OCI-LY7 (cell line): ENCODE measurements at regions of chr1 and their contacts with region 1.

Region 1: GRCh38 chr1:1374929-1375662 is at the start of gene AURKAIP1:
- DNase-seq: peak; percentile 100
- H3K4me3 ChIP-seq: peak within 1 kb of the TSS; percentile 99
- H3K27ac ChIP-seq: peak within 1 kb of the TSS; percentile 75
- H3K4me1 ChIP-seq: peaks cover 38% of the 10 kb centered on the region
- CTCF ChIP-seq: peak; percentile 42; the same call in 1 of the 2 replicates
- total RNA-seq, gene AURKAIP1: 156 and 163 TPM in 2 replicates

Region 2: GRCh38 chr1:1115786-1116700 is 259.1 kb before region 1 on chr1 and contains the start of gene C1orf159:
- CTCF ChIA-PET with region 1: no interaction called
- POLR2A ChIA-PET with region 1: no interaction called
- intact Hi-C with region 1: no loop called
- DNase-seq: peak; percentile 98
- H3K4me3 ChIP-seq: peak within 1 kb of the TSS; percentile 95
- H3K27ac ChIP-seq: no peak within 1 kb of the TSS
- H3K4me1 ChIP-seq: peaks cover 5% of the 10 kb centered on the region
- CTCF ChIP-seq: no peak
- total RNA-seq, gene C1orf159: 13.1 and 27.6 TPM in 2 replicates

Region 3: DNA sequence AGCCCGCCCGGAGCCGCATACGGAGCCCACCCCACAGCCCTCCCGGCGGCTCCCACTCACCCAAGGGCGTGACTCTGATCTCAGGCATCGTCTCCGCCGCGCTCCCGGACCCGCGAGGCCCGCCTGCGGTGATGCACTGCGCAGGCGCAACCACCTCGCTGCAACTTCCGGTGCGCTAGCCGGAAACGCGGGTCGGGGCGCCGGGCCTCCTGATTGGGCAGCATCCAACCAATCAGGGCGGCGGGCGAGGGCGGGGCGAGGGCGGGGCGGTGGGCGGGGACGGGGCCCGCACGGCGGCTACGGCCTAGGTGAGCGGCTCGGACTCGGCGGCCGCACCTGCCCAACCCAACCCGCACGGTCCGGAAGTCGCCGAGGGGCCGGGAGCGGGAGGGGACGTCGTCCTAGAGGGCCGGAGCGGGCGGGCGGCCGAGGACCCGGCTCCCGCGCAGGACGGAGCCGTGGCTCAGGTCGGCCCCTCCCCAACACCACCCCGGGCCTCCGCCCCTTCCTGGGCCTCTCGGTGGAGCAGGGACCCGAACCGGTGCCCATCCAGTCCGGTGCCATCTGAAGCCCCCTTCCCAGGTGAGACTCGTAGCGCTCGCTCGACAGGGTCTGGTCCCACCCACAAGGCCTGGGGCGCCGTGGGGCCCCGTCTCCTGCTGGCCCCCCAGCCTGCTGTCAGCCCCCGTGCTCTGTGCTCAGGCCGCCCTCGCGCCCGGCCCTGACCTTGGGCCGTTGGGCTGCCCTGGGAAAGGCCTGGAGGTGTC is 50.4 kb before region 1 on chr1 and contains the starts of genes CPTP and INTS11:
- CTCF ChIA-PET with region 1: no interaction called
- POLR2A ChIA-PET with region 1: no interaction called
- intact Hi-C with region 1: loop called (anchors 2 kb)
- DNase-seq: peak; percentile 96
- H3K4me3 ChIP-seq: peak within 1 kb of the TSS; percentile 84
- H3K27ac ChIP-seq: peak within 1 kb of the TSS; percentile 36
- H3K4me1 ChIP-seq: peaks cover 25% of the 10 kb centered on the region
- CTCF ChIP-seq: no peak
- total RNA-seq, gene CPTP: 16.6 and 18.5 TPM in 2 replicates
- total RNA-seq, gene INTS11: 128 and 142 TPM in 2 replicates

Region 4: DNA sequence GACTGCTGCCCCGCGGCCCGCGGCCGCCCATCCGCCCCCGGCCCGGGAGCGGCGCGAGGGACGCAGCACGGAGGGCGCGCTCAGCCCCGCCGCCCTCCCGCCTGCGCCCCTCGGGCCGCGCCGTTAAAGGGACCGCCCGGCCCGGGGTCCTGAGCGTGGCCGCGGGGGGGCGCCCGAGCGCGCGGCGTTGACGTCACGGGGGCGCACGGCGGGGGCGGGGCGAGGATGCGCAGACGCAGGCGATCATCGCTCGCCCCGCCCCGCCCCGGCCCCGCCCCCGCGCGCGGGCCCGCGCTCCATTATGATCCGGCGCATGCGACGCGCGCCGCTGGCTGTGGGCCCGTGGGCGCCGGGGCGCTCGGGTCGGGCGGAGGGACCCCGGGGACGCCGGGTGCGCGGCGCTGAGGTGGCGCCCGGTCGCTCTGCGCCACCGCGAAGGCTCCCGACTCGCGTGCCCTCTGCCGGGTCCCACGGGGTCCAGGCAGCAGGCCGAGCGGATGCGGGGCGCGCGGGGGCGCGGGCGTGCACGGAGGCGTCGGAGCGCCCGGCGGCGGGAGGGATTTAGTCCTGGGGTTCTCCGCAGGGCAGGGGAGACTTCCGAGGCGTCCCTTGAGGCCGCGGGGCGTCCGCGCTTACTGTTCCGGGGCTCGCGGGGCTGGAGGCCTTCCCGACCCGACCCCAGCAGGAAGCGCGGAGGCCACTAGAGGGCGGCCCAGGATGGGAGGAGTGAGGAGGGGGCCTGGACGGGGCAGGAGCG is 25.7 kb before region 1 on chr1 and contains the start of gene DVL1:
- CTCF ChIA-PET with region 1: no interaction called
- POLR2A ChIA-PET with region 1: interaction called, 3 read pairs
- intact Hi-C with region 1: loop called (anchors 1 kb)
- DNase-seq: peak; percentile 80
- H3K4me3 ChIP-seq: peak within 1 kb of the TSS; percentile 78
- H3K27ac ChIP-seq: peak within 1 kb of the TSS; percentile 64
- H3K4me1 ChIP-seq: peaks cover 31% of the 10 kb centered on the region
- CTCF ChIP-seq: peak; percentile 60
- total RNA-seq, gene DVL1: 41.7 and 47.1 TPM in 2 replicates

Region 5: DNA sequence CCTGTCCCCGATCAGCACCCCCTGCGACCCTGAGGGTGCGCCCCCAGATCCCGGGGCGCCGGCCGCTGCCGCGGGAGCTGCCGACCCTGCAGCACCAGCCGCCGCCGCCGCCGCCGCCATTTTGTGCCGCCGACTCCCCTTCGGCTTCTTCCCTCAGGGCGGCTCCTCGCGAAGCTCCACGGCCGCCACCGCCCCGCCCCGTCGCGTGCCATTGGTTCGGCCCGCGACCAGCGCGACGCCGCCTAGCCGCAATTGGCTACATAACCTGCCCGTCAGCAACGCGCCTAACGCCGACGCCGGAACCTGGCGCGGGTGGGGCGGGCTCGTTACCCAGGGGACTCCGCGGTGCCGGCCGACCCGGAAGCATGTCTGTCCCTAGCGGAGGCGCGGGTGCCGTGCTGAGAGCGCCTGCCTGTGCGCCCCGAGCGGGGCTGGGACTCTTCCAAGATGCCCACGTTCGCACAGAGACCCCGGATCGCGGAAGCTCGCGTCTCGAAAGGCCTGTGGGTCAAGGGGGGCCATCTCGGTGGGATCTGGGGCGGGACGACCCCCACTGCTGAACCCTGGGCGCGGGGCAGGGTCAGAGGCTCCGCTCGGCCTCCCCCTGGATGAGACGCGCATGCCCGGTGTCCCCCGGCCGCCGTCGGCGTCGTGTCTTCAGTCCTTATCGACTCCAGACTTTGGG is 24.2 kb after region 1 on chr1 and contains the start of gene CCNL2:
- CTCF ChIA-PET with region 1: interaction called, 3 read pairs
- POLR2A ChIA-PET with region 1: interaction called, 3 read pairs
- intact Hi-C with region 1: loop called (anchors 1 kb)
- DNase-seq: peak; percentile 99
- H3K4me3 ChIP-seq: peak within 1 kb of the TSS; percentile 90
- H3K27ac ChIP-seq: peak within 1 kb of the TSS; percentile 54
- H3K4me1 ChIP-seq: peaks cover 29% of the 10 kb centered on the region
- CTCF ChIP-seq: peak; percentile 42; the same call in 1 of the 2 replicates
- total RNA-seq, gene CCNL2: 297 and 307 TPM in 2 replicates

Region 6: DNA sequence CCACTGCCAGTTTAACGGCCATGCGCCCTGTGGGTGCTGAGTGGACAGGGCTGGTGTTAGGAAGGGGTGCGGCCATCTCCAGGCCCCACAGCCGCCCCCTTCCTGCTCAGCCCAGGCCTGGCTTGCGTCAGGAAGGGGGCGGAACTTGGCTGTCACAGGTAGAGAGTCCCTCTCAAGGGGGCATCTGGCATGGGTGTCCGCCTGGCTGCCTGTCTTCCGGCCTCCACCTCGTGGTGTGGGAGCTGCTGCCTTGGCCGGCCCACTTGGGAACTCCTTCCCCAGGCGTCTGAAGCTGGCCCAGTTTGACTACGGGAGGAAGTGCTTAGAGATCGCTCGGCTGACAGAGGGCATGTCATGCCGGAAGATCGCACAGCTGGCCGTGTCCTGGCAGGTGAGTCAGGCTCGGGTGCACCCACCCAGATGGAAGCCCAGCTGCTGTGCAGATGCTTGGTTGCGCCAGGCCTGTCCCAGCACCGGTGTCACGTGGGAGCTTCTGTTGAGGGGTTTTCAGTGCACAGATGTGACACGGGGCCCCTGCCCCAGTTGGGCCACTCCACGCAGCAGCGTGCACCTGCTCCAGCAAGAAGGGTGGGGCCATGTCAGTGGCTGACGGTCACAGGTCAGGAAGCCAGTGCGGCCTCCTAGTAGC is 87.3 kb after region 1 on chr1:
- CTCF ChIA-PET with region 1: no interaction called
- POLR2A ChIA-PET with region 1: interaction called, 3 read pairs
- intact Hi-C with region 1: loop called (anchors 2 kb)
- DNase-seq: peak; percentile 89
- H3K4me3 ChIP-seq: peak overlapping the region; percentile 33
- H3K27ac ChIP-seq: peak overlapping the region; percentile 77
- H3K4me1 ChIP-seq: peaks cover 22% of the 10 kb centered on the region
- CTCF ChIP-seq: no peak